Right ventricle myocardium inferior (tissue), 1 donor: ENCODE measurements at regions of chrX and their contacts with region 1.

Region 1: DNA sequence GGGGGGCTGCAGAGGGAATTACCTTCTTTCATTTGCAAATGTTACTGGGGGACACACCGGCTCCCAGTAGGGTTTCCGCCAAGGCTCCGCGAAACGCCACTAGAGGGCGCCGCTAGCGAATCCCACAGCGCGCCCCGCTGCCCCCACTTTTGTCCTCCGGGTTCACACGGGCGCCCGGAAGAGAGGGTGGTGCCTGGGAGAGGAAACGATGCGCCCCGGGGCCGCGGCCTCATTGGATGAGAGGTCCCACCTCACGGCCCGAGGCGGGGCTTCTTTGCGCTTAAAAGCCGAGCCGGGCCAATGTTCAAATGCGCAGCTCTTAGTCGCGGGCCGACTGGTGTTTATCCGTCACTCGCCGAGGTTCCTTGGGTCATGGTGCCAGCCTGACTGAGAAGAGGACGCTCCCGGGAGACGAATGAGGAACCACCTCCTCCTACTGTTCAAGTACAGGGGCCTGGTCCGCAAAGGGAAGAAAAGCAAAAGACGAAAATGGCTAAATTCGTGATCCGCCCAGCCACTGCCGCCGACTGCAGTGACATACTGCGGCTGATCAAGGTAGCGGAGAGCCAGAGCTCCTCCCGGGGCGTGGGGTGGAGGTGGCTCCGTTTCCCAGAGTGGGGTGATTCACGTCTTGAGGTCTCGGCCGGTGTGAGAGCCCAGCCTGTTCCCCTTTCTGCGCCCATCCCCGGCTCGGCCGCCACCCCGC is at the start of gene SAT1:
- DNase-seq: peak; percentile 98
- ATAC-seq: peak; percentile 97
- total RNA-seq, gene SAT1: 130 TPM

Region 2: GRCh38 chrX:23694606-23695005 is 88.4 kb before region 1 on chrX:
- intact Hi-C with region 1: loop called (anchors 5 kb)
- DNase-seq: peak; percentile 71
- ATAC-seq: no peak

Region 3: GRCh38 chrX:23732704-23733103 is 50.3 kb before region 1 on chrX:
- intact Hi-C with region 1: no loop called
- DNase-seq: no peak
- ATAC-seq: no peak

Region 4: GRCh38 chrX:23742697-23743622 is 40.1 kb before region 1 on chrX and contains the start of gene ACOT9:
- intact Hi-C with region 1: loop called (anchors 5 kb)
- DNase-seq: peak; percentile 95
- ATAC-seq: peak; percentile 99
- total RNA-seq, gene ACOT9: 50.1 TPM

Region 5: GRCh38 chrX:23901805-23902204 is 118.8 kb after region 1 on chrX:
- intact Hi-C with region 1: loop called (anchors 1 kb)
- DNase-seq: no peak
- ATAC-seq: peak; percentile 92

Region 6: DNA sequence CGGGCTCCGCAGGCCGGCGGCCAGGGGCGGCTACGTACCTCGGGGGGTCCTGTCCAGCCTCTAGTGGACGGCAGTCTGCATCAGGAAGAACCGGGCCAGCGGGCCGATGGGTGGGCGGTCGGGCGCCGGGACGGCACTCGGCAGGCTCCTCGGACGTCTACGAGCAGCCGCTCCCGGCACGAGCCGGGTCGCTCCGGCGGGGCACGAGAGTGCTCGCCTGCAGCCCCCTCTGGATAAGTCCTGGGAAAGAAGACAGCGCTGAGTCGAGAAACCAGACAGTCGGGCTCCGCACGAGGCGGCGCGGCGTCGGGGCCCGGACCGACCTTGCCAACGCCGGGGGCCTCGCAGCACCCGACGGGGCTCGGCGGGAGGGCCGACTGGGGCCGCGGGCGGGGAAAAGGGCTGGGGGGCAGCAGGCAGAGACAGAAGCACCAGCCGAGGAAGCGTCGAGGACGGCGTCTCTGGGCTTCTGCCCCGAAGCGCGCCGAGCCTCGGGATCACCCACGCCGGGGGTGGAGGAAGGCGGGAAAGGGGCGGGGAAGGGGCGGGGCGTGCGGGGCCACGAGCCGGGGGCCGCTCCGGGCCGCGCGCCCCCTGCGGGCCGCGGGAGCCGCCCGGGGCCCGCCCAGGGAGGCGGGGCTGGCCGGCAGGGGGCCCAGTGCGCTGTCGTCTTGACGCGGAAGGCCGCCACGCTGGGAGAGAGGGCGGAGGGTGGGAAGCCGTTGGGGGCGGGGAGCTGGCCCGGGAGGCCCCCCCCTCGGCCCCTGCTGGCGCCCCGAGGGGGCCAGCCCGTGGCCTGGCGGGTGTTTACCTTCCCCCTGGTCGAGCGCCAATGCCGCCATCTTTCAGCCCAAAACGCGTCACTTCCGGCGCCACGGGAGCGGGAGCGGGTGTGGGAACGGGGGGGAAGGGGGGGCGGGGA is 242.1 kb after region 1 on chrX:
- intact Hi-C with region 1: loop called (anchors 10 kb)
- DNase-seq: peak; percentile 92
- ATAC-seq: peak; percentile 95

Region 7: DNA sequence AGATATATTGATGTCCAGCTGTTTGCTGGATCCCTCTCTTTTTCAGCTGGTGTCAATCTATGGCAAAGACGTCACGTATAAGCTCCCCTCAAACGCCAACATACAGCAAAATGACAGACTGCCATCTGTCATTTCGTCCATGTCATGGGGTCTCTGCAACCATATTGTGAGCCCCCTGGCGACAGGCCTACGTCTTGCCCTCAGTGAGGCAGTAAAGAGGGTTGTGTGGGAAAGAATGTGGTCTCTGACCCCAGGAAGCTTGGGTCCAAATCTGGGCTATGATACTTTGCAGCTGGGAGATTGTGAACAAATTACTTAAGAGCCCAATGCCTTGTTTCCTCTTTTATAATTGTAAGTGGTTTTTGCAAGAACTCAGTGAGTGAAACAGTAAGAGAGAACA is 523.4 kb after region 1 on chrX:
- intact Hi-C with region 1: no loop called
- DNase-seq: no peak
- ATAC-seq: no peak